Activated naive CD4-positive, alpha-beta T cell treated with anti-CD3 and anti-CD28 coated beads for 36 hours (primary cell): ENCODE measurements at regions of chr12 and their contacts with region 1.

Region 1: DNA sequence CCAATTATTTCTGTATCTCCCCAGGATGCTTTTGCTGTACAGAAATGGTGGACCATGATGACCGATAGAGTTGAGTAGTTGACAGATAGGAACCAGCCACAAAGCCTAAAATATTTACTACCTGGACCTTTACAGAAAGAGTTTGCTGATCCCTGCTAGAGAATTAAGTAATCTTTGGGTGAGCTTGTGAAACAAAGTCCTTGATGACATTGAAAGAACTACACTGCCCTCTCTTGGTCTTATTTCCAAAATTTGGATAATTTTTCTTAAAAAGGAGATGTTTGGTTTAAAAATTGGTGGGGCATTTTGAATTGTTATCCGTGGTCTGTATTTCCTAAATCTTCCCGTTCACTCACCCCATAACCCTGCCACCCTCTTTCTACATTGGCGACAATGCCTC is 13.7 kb upstream of the TCTN1 start:
- DNase-seq: no peak
- H3K4me3 Mint-ChIP-seq: no peak overlapping the region
- H3K27ac Mint-ChIP-seq: no peak overlapping the region
- H3K4me1 Mint-ChIP-seq: peaks cover 6% of the 10 kb centered on the region
- H3K27me3 Mint-ChIP-seq: no peaks in the 10 kb centered on the region

Region 2: DNA sequence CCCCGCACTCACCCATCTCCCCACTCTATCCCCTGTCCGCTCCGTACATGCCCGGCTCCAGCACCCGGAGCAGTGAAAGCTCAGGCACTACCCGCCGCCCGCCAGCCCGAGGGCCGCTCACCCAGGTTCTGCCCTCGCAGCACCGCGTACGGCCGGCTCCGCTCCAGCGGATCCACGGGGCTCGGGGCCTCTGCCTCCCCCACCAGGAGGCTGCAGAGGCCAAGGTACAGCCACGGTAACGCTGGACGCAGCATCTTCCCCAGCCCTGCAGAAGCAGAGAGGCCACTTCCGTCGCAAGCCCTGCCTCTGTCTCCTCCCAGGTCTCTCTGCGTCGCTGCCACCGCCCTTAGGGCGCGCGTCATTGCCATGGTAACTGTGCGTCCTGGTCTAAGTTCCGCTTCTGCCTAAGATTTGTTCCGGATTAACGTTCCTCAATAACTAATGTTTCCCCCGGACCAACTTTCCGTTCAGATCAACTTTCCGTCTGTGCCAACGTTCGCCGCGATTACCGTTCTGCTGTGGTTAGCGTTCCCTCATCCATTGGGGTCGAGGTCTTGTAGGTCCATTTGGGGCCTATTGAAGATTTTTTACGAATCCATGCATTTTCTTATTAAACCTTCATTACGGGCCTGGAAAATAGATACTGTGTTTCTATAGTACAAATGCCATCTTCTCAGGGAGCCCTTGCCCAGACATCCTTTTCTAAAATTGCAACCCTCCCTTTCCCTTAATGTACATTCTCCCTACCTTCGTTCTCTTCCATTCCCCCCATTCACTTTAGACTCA is 551.8 kb before region 1 on chr12 and contains the start of gene C12orf76:
- CTCF ChIA-PET with region 1: no interaction called
- intact Hi-C with region 1: no loop called
- DNase-seq: peak; percentile 96
- H3K4me3 Mint-ChIP-seq: peak within 1 kb of the TSS; percentile 83
- H3K27ac Mint-ChIP-seq: peak within 1 kb of the TSS; percentile 87
- H3K4me1 Mint-ChIP-seq: peaks cover 28% of the 10 kb centered on the region
- H3K27me3 Mint-ChIP-seq: no peaks in the 10 kb centered on the region
- total RNA-seq, gene C12orf76: 12.1 to 12.9 TPM

Region 3: DNA sequence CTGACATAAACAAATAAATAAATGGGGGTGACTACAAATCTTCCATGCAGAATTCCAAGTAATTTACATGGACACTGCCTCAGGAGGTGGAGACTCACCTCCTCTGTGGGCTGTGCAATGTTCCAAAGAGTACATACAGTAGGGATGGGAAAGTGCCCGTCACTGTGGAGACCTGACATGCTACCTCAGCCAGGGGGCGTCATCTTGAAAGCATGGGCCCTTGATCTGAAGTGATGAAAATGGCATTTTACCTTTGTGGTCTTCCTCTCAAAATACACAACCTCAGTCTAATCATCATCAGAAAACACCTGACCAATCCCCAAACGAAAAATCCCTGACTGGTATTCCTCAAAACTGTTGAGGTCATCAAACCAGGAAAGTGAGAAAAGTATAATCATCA is 245.2 kb before region 1 on chr12:
- CTCF ChIA-PET with region 1: interaction called, 5 read pairs
- intact Hi-C with region 1: loop called (anchors 5 kb)
- DNase-seq: peak; percentile 59
- H3K4me3 Mint-ChIP-seq: no peak overlapping the region
- H3K27ac Mint-ChIP-seq: no peak overlapping the region
- H3K4me1 Mint-ChIP-seq: peaks cover 13% of the 10 kb centered on the region
- H3K27me3 Mint-ChIP-seq: peaks cover 2% of the 10 kb centered on the region

Region 4: DNA sequence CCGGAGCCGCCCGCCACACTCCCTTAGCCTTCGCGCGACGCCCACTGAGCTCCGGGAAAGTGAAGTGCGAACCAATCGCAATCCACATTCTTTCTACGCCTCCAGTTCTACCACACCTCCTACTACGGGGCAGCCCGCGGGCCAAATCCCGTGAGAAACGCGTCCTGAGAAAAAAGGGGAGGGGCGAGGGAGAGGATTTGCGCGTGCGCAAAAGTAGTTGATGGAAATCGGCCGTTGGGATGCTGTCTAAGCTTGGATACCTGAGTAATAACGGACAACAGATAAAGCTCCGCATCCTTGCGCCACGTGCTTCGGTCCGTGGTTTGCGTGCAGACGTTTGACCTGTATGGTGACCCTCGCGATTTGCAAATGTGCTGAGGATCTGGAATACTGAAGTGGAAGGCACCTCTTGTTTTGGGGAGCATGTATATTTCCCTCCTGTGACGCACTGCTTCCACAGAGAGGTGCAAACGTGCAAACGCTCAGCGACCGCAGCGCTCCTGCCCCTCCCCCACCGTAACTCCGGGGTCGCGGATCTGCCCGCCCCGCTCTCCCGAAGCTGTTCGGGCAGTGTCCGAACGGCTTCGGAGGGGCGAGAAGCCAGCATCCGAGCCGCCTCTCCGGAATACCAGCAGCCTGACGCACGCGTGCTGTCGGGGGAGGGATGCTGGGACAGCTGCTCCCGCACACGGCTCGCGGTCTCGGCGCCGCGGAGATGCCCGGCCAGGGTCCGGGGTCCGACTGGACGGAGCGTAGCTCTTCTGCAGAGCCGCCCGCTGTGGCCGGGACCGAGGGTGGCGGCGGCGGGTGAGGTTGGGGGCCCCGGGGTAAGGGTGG is 131.8 kb before region 1 on chr12 and contains the starts of genes FAM216A and GPN3:
- CTCF ChIA-PET with region 1: interaction called, 36 read pairs
- intact Hi-C with region 1: loop called (anchors 1 kb)
- DNase-seq: peak; percentile 98
- H3K4me3 Mint-ChIP-seq: peak within 1 kb of the TSS; percentile 98
- H3K27ac Mint-ChIP-seq: peak within 1 kb of the TSS; percentile 96
- H3K4me1 Mint-ChIP-seq: peaks cover 41% of the 10 kb centered on the region
- H3K27me3 Mint-ChIP-seq: no peaks in the 10 kb centered on the region
- total RNA-seq, gene FAM216A: 37.0 to 39.5 TPM
- total RNA-seq, gene GPN3: 58.2 to 59.8 TPM

Region 5: GRCh38 chr12:110513842-110514241 is 86.4 kb before region 1 on chr12:
- CTCF ChIA-PET with region 1: interaction called, 199 read pairs
- intact Hi-C with region 1: loop called (anchors 1 kb)
- DNase-seq: no peak
- H3K4me3 Mint-ChIP-seq: no peak overlapping the region
- H3K27ac Mint-ChIP-seq: no peak overlapping the region
- H3K4me1 Mint-ChIP-seq: peaks cover 2% of the 10 kb centered on the region
- H3K27me3 Mint-ChIP-seq: no peaks in the 10 kb centered on the region

Region 6: DNA sequence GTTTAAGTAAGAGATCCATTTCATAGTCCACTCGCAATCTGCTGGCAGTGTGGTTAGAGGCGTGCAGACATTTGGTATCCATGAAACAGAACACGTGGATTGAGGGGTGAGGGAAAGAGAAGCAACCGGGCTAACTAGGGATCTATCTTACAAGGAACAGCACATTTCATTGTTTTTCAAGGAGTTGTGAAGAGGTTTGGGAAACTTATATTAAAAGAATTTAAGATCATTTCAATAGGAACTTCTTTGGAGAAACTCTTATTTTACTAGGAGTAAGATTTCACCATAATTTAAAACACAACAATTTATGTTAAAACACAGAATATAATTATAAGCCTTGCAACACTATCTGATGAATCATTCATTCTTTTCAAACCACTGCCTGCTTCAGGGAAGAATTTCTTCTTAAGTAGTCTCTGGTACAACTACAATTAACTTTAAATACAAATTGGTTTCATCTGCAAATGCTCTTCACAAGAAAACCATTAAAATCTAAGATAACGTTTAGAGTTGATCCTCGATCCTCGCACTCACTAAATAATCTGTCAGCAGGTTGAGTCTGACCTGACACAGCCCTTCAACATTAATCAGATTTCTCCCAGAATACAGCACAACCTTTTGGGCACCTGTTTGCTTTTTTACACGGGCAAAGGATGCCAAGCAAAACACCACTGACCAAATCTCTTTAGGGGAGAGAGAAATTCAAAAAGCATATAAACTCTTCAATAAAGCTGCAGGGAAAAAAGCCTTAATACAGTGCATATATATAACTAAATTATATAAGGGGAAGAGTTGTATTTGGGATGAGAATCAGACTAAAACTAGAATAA is 44.5 kb before region 1 on chr12:
- CTCF ChIA-PET with region 1: interaction called, 126 read pairs
- intact Hi-C with region 1: loop called (anchors 1 kb)
- DNase-seq: no peak
- H3K4me3 Mint-ChIP-seq: no peak overlapping the region
- H3K27ac Mint-ChIP-seq: no peak overlapping the region
- H3K4me1 Mint-ChIP-seq: peaks cover 60% of the 10 kb centered on the region
- H3K27me3 Mint-ChIP-seq: no peaks in the 10 kb centered on the region

Region 7: DNA sequence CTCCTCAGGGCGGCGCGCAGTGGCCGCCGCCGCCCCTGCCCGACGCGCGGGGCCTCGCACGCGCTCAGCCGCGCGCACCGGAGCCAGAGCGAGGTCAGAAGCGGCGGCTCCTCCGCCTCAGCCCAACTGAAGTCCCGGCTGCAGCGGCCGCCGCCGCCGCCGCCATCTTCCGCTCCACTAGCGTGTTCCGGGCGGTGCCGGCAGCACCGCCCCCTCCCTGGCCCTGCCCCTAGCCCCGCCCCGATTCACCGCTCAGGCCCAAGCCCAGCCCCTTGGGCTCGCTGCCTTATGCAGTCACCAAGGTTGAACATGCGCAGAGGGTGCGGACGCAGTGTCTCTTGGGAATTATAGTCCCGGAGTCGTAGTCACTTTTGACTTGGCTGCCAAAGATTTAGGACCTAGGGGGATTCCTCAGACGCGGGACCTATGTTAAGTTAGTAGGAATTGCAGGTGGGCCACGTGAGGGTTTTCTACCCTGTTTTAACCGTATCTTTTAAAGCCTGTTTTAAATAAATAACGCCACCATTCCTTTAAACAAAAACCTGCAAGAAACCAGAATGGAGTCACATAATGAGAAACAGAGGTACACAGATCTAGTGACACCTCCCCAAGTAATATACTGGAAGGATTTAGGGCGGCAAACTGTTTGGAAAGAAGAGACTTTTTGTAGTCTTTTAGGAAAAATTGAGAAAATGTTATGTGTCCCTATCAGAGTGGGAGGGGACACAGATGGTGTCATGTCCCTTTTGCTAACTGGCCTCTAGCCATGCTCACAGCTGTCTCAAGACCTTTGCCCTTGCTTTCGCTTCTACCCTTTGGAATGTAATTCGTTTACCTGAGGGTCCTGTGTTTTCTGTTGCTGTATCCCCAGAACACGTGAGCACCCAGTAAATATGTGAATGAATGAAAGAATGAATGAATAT is 16.9 kb before region 1 on chr12 and contains the start of gene PPTC7:
- CTCF ChIA-PET with region 1: interaction called, 27 read pairs
- intact Hi-C with region 1: no loop called
- DNase-seq: peak; percentile 99
- H3K4me3 Mint-ChIP-seq: peak within 1 kb of the TSS; percentile 90
- H3K27ac Mint-ChIP-seq: peak within 1 kb of the TSS; percentile 98
- H3K4me1 Mint-ChIP-seq: peaks cover 59% of the 10 kb centered on the region
- H3K27me3 Mint-ChIP-seq: no peaks in the 10 kb centered on the region
- total RNA-seq, gene PPTC7: 41.1 to 43.2 TPM

Region 8: DNA sequence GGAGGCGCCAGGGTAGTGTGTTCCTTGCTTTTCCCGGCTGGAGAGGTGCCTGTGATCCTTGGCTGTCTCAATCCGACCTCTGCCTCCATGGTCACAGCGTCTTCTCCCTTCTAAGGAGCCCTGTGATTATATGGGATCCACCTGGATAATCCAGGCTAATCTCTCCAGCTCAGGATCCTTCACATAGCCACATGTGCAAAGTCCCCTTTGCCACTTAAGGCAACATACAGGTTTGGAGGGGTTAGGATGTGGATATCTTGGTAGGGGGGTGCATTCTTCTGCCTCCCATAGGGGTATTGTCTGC is 89.8 kb after region 1 on chr12:
- CTCF ChIA-PET with region 1: no interaction called
- intact Hi-C with region 1: no loop called
- DNase-seq: no peak
- H3K4me3 Mint-ChIP-seq: peak overlapping the region; percentile 80
- H3K27ac Mint-ChIP-seq: peak overlapping the region; percentile 7
- H3K4me1 Mint-ChIP-seq: peaks cover 32% of the 10 kb centered on the region
- H3K27me3 Mint-ChIP-seq: no peaks in the 10 kb centered on the region

Region 9: GRCh38 chr12:110826592-110827200 is 226.4 kb after region 1 on chr12:
- CTCF ChIA-PET with region 1: interaction called, 9 read pairs
- intact Hi-C with region 1: loop called (anchors 1 kb)
- DNase-seq: peak; percentile 97
- H3K4me3 Mint-ChIP-seq: peak overlapping the region; percentile 7
- H3K27ac Mint-ChIP-seq: peak overlapping the region; percentile 50
- H3K4me1 Mint-ChIP-seq: peaks cover 15% of the 10 kb centered on the region
- H3K27me3 Mint-ChIP-seq: no peaks in the 10 kb centered on the region